ENCODE measurements at regions of chr2 and their contacts with region 1.

Region 1: DNA sequence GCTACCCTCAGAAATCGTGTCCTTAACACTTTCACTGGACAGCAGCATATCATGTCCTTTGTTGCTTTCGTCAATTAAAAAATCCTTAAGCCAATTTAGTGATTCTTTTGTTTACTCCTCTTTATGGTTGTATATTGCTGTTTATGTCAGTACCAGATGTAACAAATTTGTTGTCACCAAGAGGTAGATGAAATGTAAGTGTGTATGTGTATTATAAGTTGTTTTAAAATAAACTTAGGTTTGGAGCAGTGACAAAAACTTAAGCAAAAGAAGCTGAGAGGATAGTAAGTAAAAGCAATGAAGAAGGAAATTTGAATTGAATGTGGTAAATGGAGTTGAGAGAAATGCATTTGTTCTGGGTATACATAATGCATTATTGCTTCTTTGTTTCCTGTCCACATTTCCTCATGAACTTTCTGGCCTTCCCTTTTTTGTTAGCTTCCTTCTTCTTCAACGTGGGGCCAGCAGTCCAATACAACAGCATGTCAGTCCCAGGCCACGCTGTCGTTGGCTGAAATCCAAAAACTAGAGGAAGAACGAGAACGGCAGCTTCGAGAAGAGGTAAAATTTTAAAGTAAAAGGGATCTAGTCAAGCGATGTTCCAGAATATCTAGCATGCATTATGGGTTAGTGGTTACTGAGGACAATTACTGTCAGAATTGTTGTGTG is 30.5 kb upstream of the SNORC start:
- DNase-seq: peak in 1 of 10 donors; percentile 31

Region 2: GRCh38 chr2:232600053-232600773 is 239.3 kb before region 1 on chr2:
- intact Hi-C with region 1: loop called (anchors 10 kb)
- DNase-seq: peak in 2 of 10 donors; percentile 40 to 62

Region 3: DNA sequence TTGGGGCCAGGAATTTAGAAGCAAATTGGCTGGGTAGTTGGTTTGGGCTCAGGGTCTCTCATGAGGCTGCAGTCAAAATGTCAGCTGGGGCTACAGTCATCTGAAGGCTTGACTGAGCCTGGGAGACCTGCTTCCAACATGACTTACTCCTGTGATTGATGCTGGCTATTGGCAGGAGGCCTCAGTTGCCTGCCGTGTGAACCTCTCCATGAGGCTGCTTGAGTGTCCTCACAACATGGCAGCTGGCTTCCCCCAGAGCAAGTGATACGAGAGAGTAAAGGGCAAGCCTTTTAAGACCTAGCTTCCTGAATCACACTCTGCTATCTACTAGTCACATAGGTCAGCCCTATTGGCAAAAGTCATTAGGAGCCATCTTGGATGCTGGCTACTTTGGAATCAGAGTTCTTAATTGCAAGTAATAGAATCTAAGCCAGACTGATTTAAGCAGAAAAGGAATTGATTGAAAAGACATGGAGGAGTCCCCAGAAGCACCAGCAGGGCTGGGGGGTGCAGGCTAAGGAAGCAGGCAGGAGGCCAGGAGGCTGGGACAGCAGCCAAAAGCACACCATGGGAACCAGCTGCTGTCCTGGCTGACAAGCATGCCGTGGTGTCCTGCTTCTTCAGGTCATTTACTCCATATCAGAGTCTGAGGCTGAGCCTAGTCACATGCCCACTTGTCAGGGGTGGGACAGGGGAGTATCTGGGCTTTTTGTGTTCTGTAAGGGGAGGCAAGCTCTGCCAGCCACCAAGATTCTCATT is 150.2 kb before region 1 on chr2:
- intact Hi-C with region 1: no loop called
- DNase-seq: peak in 8 of 10 donors; percentile 26 to 91 (median 53)

Region 4: DNA sequence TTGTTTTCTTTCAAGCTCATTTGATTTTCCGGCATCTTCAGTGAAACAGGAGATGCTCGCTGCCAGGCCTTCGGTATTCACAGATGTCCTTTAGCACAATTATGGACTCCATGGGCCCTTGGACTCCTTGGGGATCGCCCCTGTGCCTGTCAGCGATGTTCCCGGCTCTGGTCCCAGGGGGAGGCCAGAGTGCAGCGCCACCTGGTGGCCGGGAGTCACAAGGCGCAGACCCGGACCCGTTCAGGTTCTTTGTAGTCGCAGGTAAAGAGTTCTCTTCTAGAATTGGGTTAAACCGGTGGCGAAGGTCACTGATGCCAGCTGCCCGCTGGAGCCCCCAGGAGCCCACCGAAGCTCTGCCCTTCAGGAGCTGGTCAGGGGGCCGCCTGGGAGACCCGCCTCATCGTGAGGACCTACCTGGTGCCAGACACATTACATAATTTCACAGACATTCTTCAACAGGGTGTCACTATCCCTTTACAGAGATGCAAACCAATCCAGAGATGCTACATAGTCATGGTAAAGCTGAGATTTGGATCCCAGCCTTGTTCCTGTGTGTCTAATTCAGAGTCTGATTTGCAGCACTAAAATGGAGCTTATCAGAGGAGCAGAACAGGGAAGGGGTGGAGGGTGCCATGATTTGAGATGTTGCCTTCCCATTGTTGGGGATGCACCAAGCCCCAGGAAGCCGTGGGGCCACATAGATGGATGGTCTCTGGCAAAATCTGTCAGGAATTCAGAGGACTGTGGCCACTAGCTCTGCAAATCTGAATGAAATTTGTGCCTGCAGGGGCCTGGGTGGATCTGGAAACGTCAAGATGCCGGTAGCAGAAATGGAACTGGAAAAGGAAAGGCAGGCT is 214.6 kb after region 1 on chr2:
- intact Hi-C with region 1: no loop called
- DNase-seq: peak in 7 of 10 donors; percentile 56 to 93 (median 79)

Measured in posterior cingulate gyrus (tissue), 11 donors.